Psoas muscle (tissue), 8 donors: ENCODE measurements at regions of chr20 and their contacts with region 1.

Region 1: DNA sequence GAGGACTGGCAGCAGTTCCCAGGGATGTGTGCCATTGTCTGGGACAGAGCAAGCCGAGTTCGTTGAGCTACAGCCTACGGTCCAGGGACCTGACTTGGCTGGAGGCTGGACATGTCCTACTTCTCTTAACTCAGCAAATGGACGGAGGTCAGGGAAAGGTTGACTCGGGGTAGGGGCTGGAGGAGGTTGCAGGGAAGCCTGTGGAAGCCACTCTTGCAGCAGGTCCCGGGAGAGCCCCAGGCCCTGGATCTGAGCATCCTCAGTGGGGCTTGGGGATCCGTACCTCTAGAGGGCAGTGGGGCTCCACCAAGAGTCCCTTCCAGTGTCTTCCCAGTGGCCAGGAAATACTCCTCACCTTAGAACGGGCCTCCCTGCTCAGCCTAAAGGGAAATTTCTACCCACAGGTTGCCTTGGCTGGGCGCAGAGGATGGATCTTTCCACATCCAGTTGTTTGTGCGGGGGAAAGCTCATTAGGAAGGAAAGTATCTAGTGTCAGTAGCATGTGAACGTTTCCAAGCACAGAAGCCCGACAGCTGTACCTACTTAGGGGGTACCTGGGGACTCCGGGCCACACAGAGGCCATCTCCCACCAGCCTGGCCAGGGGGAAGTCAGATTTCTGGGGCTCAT is 170.2 kb downstream of the NFATC2 start:
- DNase-seq: peak; percentile 61 to 79
- ATAC-seq: peak; percentile 90 to 99 (median 97)
- H3K4me3 ChIP-seq: no peak overlapping the region
- H3K27ac ChIP-seq: no peak overlapping the region
- H3K4me1 ChIP-seq: peaks cover 9% of the 10 kb centered on the region
- H3K27me3 ChIP-seq: no peaks in the 10 kb centered on the region
- CTCF ChIP-seq: peak; percentile 86

Region 2: DNA sequence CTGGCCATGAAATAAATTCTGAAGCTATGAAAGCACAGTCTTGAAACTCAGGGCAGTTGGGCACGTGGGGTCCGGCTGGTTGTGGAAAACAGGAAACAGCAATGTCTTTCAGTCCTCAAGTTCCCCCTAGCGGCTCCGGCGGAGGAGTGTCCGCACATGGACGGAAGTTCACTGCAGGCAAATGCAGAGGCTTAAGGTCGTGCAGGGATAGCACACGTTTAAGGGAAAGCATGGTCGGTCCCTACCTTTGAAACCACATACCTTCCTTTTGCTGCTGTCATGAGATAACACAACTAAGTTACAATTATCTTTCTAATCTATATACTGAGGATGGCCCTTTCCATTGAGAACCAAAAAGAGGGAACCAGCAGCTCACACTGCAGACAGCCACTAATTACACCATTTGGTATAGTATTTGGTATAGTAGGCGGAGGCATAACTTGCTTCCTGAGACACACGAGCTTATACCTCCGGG is 222.8 kb after region 1 on chr20:
- intact Hi-C with region 1: loop called (anchors 1 to 2 kb)
- DNase-seq: peak; percentile 83 to 92
- ATAC-seq: peak; percentile 92 to 100 (median 97)
- H3K4me3 ChIP-seq: no peak overlapping the region
- H3K27ac ChIP-seq: no peak overlapping the region
- H3K4me1 ChIP-seq: peaks cover 5% of the 10 kb centered on the region
- H3K27me3 ChIP-seq: no peaks in the 10 kb centered on the region
- CTCF ChIP-seq: peak; percentile 91

Region 3: GRCh38 chr20:51624157-51624731 is 252.0 kb after region 1 on chr20:
- intact Hi-C with region 1: loop called in 1 of 2 experiments (anchors 1 kb)
- DNase-seq: peak; percentile 41 to 63
- ATAC-seq: peak; percentile 27 to 59 (median 40)
- H3K4me3 ChIP-seq: no peak overlapping the region
- H3K27ac ChIP-seq: no peak overlapping the region
- H3K4me1 ChIP-seq: no peaks in the 10 kb centered on the region
- H3K27me3 ChIP-seq: no peaks in the 10 kb centered on the region
- CTCF ChIP-seq: peak; percentile 50